ENCODE measurements at regions of chr2 and their contacts with region 1.

Region 1: DNA sequence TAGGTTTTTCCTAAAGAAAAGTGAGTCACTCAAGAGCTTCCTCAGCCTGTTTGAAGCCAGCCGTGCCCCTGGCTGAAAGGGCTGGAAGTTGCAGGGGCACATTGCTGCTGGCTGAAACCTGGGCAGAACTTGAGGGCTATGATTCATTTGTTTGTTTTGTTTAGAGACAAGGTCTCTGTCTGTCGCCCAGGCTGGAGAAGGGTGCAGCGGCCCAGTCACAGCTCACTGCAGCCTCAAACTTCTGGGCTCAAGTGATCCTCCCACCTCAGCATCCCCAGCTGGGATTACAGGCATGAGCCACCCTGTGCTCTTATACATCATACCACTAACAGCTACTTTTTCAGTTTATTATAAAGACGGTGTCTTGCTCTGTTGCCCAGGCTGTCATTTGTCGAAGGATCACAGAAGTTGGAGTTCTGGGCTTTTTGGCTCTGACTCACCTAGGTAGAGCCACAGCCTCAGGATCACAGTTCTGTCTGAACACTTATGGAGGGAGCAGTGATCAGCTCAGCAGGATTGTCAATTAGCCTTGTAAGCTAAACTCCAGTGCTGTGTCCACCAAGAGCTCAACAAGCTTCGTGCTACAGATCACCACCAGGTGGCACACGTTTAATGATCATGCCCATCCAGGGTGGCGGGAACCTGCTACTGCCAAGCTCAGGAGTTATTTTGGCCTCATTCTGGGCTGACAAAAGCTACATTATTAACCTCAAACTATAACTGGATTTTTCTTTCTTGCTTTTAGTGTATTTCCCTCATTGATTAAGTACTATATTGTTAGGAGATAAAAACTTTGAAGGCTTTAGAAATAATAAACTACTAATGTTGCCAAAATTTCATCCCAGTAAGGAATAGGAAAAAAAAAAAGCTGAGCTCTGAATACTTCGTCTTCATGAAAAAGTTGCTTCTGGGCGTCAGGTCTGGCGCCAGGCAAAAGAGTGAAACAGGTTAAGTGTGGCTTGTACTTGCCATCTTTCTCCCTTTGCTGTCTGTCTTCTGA is 57.9 kb downstream of the ARHGEF33 start:
- DNase-seq: peak; percentile 30 to 58
- ATAC-seq: peak; percentile 70 to 76 (median 72)
- H3K4me3 ChIP-seq: no peak overlapping the region
- H3K27ac ChIP-seq: no peak overlapping the region
- H3K4me1 ChIP-seq: no peaks in the 10 kb centered on the region
- H3K27me3 ChIP-seq: no peaks in the 10 kb centered on the region
- CTCF ChIP-seq: peak; percentile 54

Region 2: DNA sequence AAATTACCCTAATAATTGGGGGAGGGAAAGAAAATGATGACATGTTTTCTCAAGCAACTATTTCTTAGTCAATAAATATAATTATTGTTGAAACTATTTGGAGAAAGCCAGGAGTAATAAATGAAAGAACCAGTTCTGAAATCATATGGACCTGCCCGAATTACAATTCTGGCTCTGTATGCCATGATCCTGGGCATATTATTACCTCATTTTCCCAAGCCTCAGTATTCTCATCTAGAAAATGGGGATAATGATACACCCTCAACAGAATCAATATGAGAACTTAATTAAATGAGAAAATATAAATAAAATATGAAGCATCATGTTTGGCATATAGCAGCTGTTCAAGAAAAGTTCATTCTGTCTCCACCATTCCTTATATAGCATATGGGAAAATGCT is 34.9 kb before region 1 on chr2:
- intact Hi-C with region 1: no loop called
- DNase-seq: no peak
- ATAC-seq: no peak
- H3K4me3 ChIP-seq: no peak overlapping the region
- H3K27ac ChIP-seq: no peak overlapping the region
- H3K4me1 ChIP-seq: peaks cover 20% of the 10 kb centered on the region
- H3K27me3 ChIP-seq: no peaks in the 10 kb centered on the region
- CTCF ChIP-seq: no peak

Region 3: GRCh38 chr2:39033980-39034379 is 86.4 kb after region 1 on chr2:
- intact Hi-C with region 1: loop called in 1 of 2 experiments (anchors 10 kb)
- DNase-seq: no peak
- ATAC-seq: no peak
- H3K4me3 ChIP-seq: no peak overlapping the region
- H3K27ac ChIP-seq: no peak overlapping the region
- H3K4me1 ChIP-seq: no peaks in the 10 kb centered on the region
- H3K27me3 ChIP-seq: no peaks in the 10 kb centered on the region
- CTCF ChIP-seq: no peak

Measured in psoas muscle (tissue), 8 donors.